ENCODE measurements at regions of chr11 and their contacts with region 1.

Region 1: GRCh38 chr11:42870480-42870879 is 441.3 kb upstream of the API5 start:
- DNase-seq: no peak
- ATAC-seq: no peak
- H3K4me3 ChIP-seq: no peak overlapping the region
- H3K27ac ChIP-seq: no peak overlapping the region
- H3K4me1 ChIP-seq: no peaks in the 10 kb centered on the region
- H3K27me3 ChIP-seq: no peaks in the 10 kb centered on the region
- CTCF ChIP-seq: no peak
- POLR2A ChIP-seq: no peak

Region 2: DNA sequence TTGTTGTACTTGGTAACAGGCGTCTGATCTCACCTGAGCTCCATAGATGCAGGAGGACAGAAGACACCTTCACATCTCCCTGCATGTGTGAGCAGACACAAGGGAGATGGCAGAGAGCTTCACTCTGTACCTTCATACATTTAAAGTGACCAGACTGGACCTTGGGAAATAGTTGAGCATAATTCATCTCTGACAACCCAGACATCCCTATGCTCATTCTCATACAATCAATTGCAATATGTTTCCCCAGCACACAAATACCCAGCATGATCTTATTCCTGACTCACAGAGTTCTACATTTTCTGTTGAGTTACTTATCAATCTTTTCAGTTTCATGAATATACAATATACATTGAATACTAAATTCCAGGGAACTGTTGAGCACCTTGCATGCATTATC is 46.9 kb before region 1 on chr11:
- in situ Hi-C with region 1: no loop called
- intact Hi-C with region 1: no loop called
- DNase-seq: no peak
- ATAC-seq: no peak
- H3K4me3 ChIP-seq: no peak overlapping the region
- H3K27ac ChIP-seq: no peak overlapping the region
- H3K4me1 ChIP-seq: no peaks in the 10 kb centered on the region
- H3K27me3 ChIP-seq: no peaks in the 10 kb centered on the region
- CTCF ChIP-seq: no peak
- POLR2A ChIP-seq: no peak

Region 3: DNA sequence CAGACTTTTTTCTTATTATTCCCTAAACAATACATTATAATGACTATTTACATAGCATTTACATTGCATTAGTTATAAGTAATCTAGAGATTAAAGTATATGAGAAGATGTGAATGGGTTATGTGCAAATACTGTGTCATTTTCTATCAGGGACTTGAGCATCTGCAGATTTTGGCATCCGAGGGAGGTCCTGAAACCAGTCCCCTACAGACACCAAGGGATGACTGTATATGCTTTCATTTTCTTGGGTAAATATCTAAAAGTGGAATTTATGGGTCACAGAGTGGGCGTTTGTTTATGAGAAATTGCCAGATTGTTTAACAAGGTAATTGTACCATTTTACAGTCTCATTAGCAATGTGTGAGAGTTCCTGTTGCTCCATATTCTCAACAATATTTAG is 13.1 kb before region 1 on chr11:
- in situ Hi-C with region 1: no loop called
- intact Hi-C with region 1: loop called (anchors 1 kb)
- DNase-seq: no peak
- ATAC-seq: no peak
- H3K4me3 ChIP-seq: no peak overlapping the region
- H3K27ac ChIP-seq: no peak overlapping the region
- H3K4me1 ChIP-seq: no peaks in the 10 kb centered on the region
- H3K27me3 ChIP-seq: no peaks in the 10 kb centered on the region
- CTCF ChIP-seq: no peak
- POLR2A ChIP-seq: no peak

Region 4: DNA sequence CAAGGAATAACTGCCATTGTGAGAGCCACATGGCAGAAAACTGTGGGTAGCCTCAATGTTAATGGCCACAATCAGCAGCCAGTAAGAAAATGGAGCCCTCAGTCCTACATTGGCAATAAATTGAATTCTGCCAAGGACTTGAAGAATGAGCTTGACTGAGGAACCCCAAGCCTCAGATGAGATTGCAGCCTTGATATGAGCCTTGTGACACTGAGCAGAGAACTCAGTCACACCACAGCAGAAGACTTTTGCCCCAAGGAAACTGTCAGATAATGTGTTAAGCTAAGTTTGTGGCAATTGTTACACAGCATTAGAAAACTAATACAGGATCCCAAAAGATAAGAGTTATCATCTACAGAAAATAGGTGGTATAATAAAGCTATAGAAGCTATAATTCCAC is 485.9 kb after region 1 on chr11:
- in situ Hi-C with region 1: no loop called
- intact Hi-C with region 1: no loop called
- DNase-seq: no peak
- ATAC-seq: no peak
- H3K4me3 ChIP-seq: no peak overlapping the region
- H3K27ac ChIP-seq: no peak overlapping the region
- H3K4me1 ChIP-seq: peaks cover 18 to 23% of the 10 kb centered on the region in 2 donors
- H3K27me3 ChIP-seq: no peaks in the 10 kb centered on the region
- CTCF ChIP-seq: no peak
- POLR2A ChIP-seq: no peak